Caco-2 (cell line): ENCODE measurements at regions of chr16 and their contacts with region 1.

Region 1: GRCh38 chr16:12095275-12096156 is 119.0 kb downstream of the SNX29 start:
- DNase-seq: peak; percentile 43 to 63
- H3K4me3 ChIP-seq: no peak overlapping the region
- H3K4me3 Mint-ChIP-seq: no peak overlapping the region
- H3K27ac Mint-ChIP-seq: no peak overlapping the region
- H3K4me1 ChIP-seq: peaks cover 7% of the 10 kb centered on the region; the same call in 1 of the 2 replicates
- H3K4me1 Mint-ChIP-seq: peaks cover 17% of the 10 kb centered on the region
- H3K27me3 ChIP-seq: no peaks in the 10 kb centered on the region
- H3K27me3 Mint-ChIP-seq: no peaks in the 10 kb centered on the region
- CTCF ChIP-seq: peak; percentile 71 to 74

Region 2: GRCh38 chr16:10981697-10982216 is 1113.8 kb before region 1 on chr16:
- CTCF ChIA-PET with region 1: interaction called, 10 read pairs
- POLR2A ChIA-PET with region 1: no interaction called
- intact Hi-C with region 1: no loop called
- DNase-seq: peak; percentile 57 to 63
- H3K4me3 ChIP-seq: no peak overlapping the region
- H3K4me3 Mint-ChIP-seq: no peak overlapping the region
- H3K27ac Mint-ChIP-seq: no peak overlapping the region
- H3K4me1 ChIP-seq: no peaks in the 10 kb centered on the region
- H3K4me1 Mint-ChIP-seq: no peaks in the 10 kb centered on the region
- H3K27me3 ChIP-seq: no peaks in the 10 kb centered on the region
- H3K27me3 Mint-ChIP-seq: no peaks in the 10 kb centered on the region
- CTCF ChIP-seq: peak; percentile 32 to 62

Region 3: DNA sequence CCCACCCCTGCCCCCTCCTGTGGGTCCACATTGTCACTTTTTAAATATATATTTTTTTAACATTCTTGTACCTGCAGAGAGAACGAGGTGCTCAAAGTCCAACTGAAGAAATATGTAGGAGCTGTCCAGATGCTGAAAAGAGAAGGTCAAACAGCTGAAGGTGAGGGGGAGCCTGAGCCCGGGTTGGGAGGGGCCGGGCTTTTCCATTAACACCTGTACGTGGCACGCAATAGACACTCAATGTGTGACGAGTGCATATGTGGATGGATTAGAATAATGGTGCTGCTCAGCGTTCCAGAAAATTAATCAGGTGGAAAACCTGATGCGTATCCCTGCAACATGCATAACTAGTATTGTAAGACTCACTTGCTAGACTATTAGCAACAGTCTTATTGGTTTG is 104.0 kb after region 1 on chr16:
- CTCF ChIA-PET with region 1: no interaction called
- POLR2A ChIA-PET with region 1: no interaction called
- intact Hi-C with region 1: loop called (anchors 5 kb)
- DNase-seq: peak in 1 of 2 experiments; percentile 59
- H3K4me3 ChIP-seq: no peak overlapping the region
- H3K4me3 Mint-ChIP-seq: no peak overlapping the region
- H3K27ac Mint-ChIP-seq: no peak overlapping the region
- H3K4me1 ChIP-seq: no peaks in the 10 kb centered on the region
- H3K4me1 Mint-ChIP-seq: no peaks in the 10 kb centered on the region
- H3K27me3 ChIP-seq: no peaks in the 10 kb centered on the region
- H3K27me3 Mint-ChIP-seq: no peaks in the 10 kb centered on the region
- CTCF ChIP-seq: no peak

Region 4: GRCh38 chr16:12228602-12229499 is 133.3 kb after region 1 on chr16:
- CTCF ChIA-PET with region 1: interaction called, 23 read pairs
- POLR2A ChIA-PET with region 1: no interaction called
- intact Hi-C with region 1: loop called (anchors 1 kb)
- DNase-seq: peak; percentile 88 to 93
- H3K4me3 ChIP-seq: no peak overlapping the region
- H3K4me3 Mint-ChIP-seq: no peak overlapping the region
- H3K27ac Mint-ChIP-seq: peak overlapping the region; percentile 87
- H3K4me1 ChIP-seq: peaks cover 25% of the 10 kb centered on the region
- H3K4me1 Mint-ChIP-seq: peaks cover 26% of the 10 kb centered on the region
- H3K27me3 ChIP-seq: no peaks in the 10 kb centered on the region
- H3K27me3 Mint-ChIP-seq: no peaks in the 10 kb centered on the region
- CTCF ChIP-seq: peak; percentile 68 to 85

Region 5: GRCh38 chr16:12257926-12258561 is 162.5 kb after region 1 on chr16:
- CTCF ChIA-PET with region 1: interaction called, 86 read pairs
- POLR2A ChIA-PET with region 1: no interaction called
- intact Hi-C with region 1: loop called (anchors 1 kb)
- DNase-seq: peak; percentile 85
- H3K4me3 ChIP-seq: no peak overlapping the region
- H3K4me3 Mint-ChIP-seq: no peak overlapping the region
- H3K27ac Mint-ChIP-seq: peak overlapping the region; percentile 18
- H3K4me1 ChIP-seq: peaks cover 10% of the 10 kb centered on the region; the same call in 1 of the 2 replicates
- H3K4me1 Mint-ChIP-seq: peaks cover 27% of the 10 kb centered on the region
- H3K27me3 ChIP-seq: no peaks in the 10 kb centered on the region
- H3K27me3 Mint-ChIP-seq: no peaks in the 10 kb centered on the region
- CTCF ChIP-seq: peak; percentile 37 to 81

Region 6: GRCh38 chr16:12340151-12340733 is 244.7 kb after region 1 on chr16:
- CTCF ChIA-PET with region 1: no interaction called
- POLR2A ChIA-PET with region 1: no interaction called
- intact Hi-C with region 1: loop called (anchors 10 kb)
- DNase-seq: peak; percentile 42 to 47
- H3K4me3 ChIP-seq: no peak overlapping the region
- H3K4me3 Mint-ChIP-seq: no peak overlapping the region
- H3K27ac Mint-ChIP-seq: no peak overlapping the region
- H3K4me1 ChIP-seq: no peaks in the 10 kb centered on the region
- H3K4me1 Mint-ChIP-seq: no peaks in the 10 kb centered on the region
- H3K27me3 ChIP-seq: no peaks in the 10 kb centered on the region; the same call in 1 of the 2 replicates
- H3K27me3 Mint-ChIP-seq: no peaks in the 10 kb centered on the region
- CTCF ChIP-seq: peak; percentile 34 to 56